ENCODE measurements at regions of chr9 and their contacts with region 1.

Region 1: GRCh38 chr9:33721674-33722358 is 73.5 kb upstream of the PRSS3 start:
- DNase-seq: peak; percentile 69 to 94
- H3K4me3 ChIP-seq: no peak overlapping the region
- H3K4me1 ChIP-seq: no peaks in the 10 kb centered on the region
- H3K27me3 ChIP-seq: no peaks in the 10 kb centered on the region

Region 2: DNA sequence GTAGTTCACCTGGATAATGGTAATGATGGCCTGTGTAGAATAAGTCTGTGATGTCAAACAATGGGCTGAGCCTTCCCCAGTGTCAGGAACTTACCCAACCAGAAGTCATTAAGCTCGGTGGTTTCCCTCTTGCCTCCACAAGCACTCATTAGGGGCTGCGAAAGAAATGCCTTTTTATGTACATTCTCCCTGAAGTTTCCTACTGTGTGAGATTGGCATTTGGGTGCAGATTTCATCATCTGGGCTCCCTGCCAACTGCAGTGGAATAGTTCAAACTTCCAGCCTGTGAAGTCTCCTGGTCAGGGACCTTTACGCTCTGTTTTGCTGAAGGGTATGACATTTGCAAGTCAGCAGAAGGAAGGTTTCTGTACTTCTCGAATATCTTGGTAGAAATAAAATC is 980.1 kb before region 1 on chr9:
- in situ Hi-C with region 1: no loop called
- DNase-seq: peak in 1 of 2 experiments; percentile 9
- H3K4me3 ChIP-seq: no peak overlapping the region
- H3K4me1 ChIP-seq: no peaks in the 10 kb centered on the region
- H3K27me3 ChIP-seq: peaks cover 7% of the 10 kb centered on the region; the same call in 1 of the 2 replicates

Region 3: GRCh38 chr9:33623658-33624586 is 97.9 kb before region 1 on chr9:
- in situ Hi-C with region 1: loop called (anchors 5 kb)
- DNase-seq: peak; percentile 57 to 82
- H3K4me3 ChIP-seq: no peak overlapping the region
- H3K4me1 ChIP-seq: peaks cover 4% of the 10 kb centered on the region
- H3K27me3 ChIP-seq: no peaks in the 10 kb centered on the region

Region 4: GRCh38 chr9:33932078-33932807 is 210.4 kb after region 1 on chr9:
- in situ Hi-C with region 1: no loop called
- DNase-seq: no peak
- H3K4me3 ChIP-seq: no peak overlapping the region
- H3K4me1 ChIP-seq: no peaks in the 10 kb centered on the region
- H3K27me3 ChIP-seq: no peaks in the 10 kb centered on the region

Measured in HAP-1 (cell line).